Activated T-helper 2 cell treated with anti-CD3 and anti-CD28 coated beads, Interferon-gamma antibody, Interleukin-2, Interleukin-4, amounts not matched to agents 10 μg/mL and 5 μg/mL and 100 μg/mL, durations not matched to agents 14 hours and 24 hours and 36 hours (primary cell): ENCODE measurements at regions of chr13 and their contacts with region 1.

Region 1: DNA sequence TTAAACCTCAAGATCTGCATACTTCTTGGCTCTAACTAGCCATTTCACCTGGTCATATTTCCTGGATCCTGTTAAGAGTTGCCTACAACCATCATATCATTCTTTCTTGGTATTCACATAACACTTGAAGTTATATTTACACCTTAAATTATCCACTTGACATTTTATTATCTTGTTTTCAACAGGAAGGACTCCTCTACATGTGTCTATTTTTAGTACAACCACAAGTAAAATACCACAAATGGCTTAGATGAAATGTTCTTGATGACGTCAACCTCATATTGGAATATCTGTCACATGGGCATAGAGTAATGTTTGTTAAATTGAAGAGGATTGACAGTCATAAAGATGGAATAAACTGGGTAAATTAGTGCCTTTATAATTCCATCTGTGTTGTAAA is 9.4 kb downstream of the PCDH20 start:
- DNase-seq: no peak
- H3K4me3 Mint-ChIP-seq: no peak overlapping the region
- H3K27ac Mint-ChIP-seq: no peak overlapping the region
- H3K4me1 Mint-ChIP-seq: no peaks in the 10 kb centered on the region
- H3K27me3 Mint-ChIP-seq: no peaks in the 10 kb centered on the region

Region 2: GRCh38 chr13:60627071-60627686 is 779.1 kb before region 1 on chr13:
- intact Hi-C with region 1: loop called (anchors 5 kb)
- DNase-seq: no peak
- H3K4me3 Mint-ChIP-seq: no peak overlapping the region
- H3K27ac Mint-ChIP-seq: no peak overlapping the region
- H3K4me1 Mint-ChIP-seq: peaks cover 4% of the 10 kb centered on the region
- H3K27me3 Mint-ChIP-seq: peaks cover 2% of the 10 kb centered on the region